ENCODE measurements at regions of chr22 and their contacts with region 1.

Region 1: DNA sequence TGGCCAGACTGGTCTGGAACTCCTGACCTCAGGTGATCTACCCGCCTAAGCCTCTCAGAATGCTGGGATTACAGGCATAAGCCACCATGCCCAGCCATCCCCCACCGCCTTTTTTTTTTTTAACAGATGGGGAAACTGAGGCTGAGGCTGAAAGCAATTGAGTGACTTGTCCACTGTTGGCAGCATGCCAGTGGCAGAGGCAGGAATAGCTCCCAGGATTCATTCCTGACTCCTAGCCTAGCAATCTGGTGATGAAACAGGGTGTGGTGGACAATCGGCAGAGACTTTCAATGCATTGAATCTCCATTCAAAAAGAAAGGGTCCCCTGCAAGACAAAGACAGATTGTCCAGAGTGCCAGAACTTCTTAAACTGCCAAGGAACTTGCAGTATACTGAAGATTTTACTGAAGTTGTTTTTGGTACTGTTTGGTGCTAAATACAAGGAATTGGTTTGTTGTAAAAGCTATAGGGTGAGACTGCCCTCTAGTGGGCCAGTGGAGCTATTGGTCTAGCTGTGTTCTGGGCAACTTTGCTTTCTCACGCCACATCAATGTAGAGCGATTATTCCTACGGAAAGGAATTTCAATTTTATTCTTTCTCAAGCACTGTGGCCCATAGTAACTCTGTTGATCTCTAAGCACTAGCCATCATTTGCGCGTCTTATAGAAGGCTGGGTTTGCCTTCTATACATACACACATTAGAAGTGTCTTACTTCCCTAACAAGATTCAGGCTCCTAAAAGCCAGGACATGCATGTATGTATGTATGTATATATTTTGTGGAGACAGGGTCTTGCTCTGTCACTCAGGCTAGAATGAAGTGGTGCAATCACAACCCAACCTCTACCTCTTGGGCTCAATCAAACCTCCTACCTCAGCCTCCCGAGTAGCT is 21.0 kb downstream of the C22orf31 start:
- DNase-seq: peak; percentile 83
- H3K4me3 ChIP-seq: no peak overlapping the region
- H3K27ac ChIP-seq: no peak overlapping the region
- H3K4me1 ChIP-seq: peaks cover 28% of the 10 kb centered on the region
- H3K27me3 ChIP-seq: no peaks in the 10 kb centered on the region
- CTCF ChIP-seq: peak; percentile 89 to 96
- POLR2A ChIP-seq: no peak

Region 2: DNA sequence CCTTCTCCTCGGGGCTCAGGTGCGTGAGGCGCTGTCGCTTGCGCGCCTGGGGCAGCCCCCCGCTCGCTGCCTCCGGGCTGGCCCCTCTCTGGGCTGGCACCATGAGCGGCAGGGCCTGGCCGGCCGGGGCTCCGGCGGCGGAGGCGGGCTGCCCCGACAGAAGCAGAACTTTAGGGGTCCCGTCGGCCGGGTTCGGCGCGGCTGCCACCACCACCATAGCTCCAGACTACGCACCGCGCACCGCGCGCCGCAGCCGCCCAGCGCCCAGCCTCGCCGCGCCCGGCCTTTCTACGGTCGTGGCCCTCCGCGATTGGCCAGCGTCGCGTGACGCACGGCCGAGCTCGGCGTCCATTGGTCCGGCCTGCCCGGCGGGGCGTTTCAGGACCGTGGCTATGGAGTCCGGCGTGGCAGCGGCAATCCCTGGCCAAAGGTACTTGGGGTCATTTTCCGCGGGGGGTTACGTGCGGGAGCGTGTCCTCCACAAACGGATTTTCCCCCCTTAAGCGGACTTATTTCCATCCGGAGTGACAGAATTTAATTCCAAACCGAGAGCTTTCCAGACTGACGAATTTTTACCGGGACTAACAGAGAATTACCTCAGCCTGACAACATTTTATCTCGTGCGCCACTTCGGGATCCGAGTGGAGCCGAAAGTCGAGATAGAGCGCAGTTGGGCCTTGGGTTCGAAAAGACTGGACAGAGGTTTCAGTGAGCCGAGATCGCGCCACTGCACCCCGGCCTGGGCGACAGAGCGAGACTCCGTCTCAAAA is 240.1 kb before region 1 on chr22 and contains the start of gene XBP1:
- CTCF ChIA-PET with region 1: interaction called, 11 read pairs
- POLR2A ChIA-PET with region 1: no interaction called
- dilution Hi-C with region 1: no loop called
- intact Hi-C with region 1: no loop called
- DNase-seq: peak; percentile 95
- H3K4me3 ChIP-seq: peak within 1 kb of the TSS; percentile 84 to 100 (median 100)
- H3K27ac ChIP-seq: peak within 1 kb of the TSS; percentile 100
- H3K4me1 ChIP-seq: peaks cover 26% of the 10 kb centered on the region
- H3K27me3 ChIP-seq: no peaks in the 10 kb centered on the region
- CTCF ChIP-seq: no peak
- POLR2A ChIP-seq: peak; percentile 94
- total RNA-seq, gene XBP1: 90.4 and 103 TPM in 2 replicates

Region 3: DNA sequence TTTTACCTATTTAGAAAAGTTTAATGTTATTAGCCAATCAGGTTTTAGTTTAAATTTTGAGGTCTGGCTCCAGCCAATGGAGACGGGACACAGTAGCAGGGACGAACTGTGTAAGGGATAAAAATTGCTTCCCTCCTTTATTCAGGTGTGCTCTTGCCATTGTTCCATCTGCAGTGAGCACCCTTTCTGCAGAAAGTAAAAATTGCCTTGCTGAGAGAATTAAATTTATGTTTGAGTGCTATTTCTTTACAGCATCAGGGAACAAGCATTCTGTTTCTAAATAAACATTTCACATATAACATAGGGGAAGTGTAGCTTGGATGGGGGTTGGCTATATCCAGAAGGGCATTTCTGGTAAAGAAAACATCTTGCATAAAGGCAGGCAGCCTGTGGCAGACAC is 193.6 kb before region 1 on chr22:
- CTCF ChIA-PET with region 1: interaction called, 10 read pairs
- POLR2A ChIA-PET with region 1: no interaction called
- dilution Hi-C with region 1: no loop called
- intact Hi-C with region 1: no loop called
- DNase-seq: no peak
- H3K4me3 ChIP-seq: no peak overlapping the region
- H3K27ac ChIP-seq: no peak overlapping the region
- H3K4me1 ChIP-seq: no peaks in the 10 kb centered on the region
- H3K27me3 ChIP-seq: no peaks in the 10 kb centered on the region
- CTCF ChIP-seq: no peak
- POLR2A ChIP-seq: no peak

Region 4: GRCh38 chr22:28882878-28883656 is 157.6 kb before region 1 on chr22 and contains the start of gene ZNRF3:
- CTCF ChIA-PET with region 1: interaction called, 32 read pairs
- POLR2A ChIA-PET with region 1: no interaction called
- dilution Hi-C with region 1: no loop called
- intact Hi-C with region 1: no loop called
- DNase-seq: peak; percentile 79
- H3K4me3 ChIP-seq: peak within 1 kb of the TSS; percentile 51 to 72 (median 54)
- H3K27ac ChIP-seq: no peak within 1 kb of the TSS
- H3K4me1 ChIP-seq: peaks cover 11% of the 10 kb centered on the region
- H3K27me3 ChIP-seq: no peaks in the 10 kb centered on the region
- CTCF ChIP-seq: no peak
- POLR2A ChIP-seq: peak; percentile 60
- total RNA-seq, gene ZNRF3: 4.4 and 5.2 TPM in 2 replicates

Region 5: GRCh38 chr22:28989484-28989883 is 51.1 kb before region 1 on chr22:
- CTCF ChIA-PET with region 1: no interaction called
- POLR2A ChIA-PET with region 1: no interaction called
- dilution Hi-C with region 1: no loop called
- intact Hi-C with region 1: no loop called
- DNase-seq: no peak
- H3K4me3 ChIP-seq: no peak overlapping the region
- H3K27ac ChIP-seq: no peak overlapping the region
- H3K4me1 ChIP-seq: no peaks in the 10 kb centered on the region
- H3K27me3 ChIP-seq: no peaks in the 10 kb centered on the region
- CTCF ChIP-seq: no peak
- POLR2A ChIP-seq: no peak

Region 6: DNA sequence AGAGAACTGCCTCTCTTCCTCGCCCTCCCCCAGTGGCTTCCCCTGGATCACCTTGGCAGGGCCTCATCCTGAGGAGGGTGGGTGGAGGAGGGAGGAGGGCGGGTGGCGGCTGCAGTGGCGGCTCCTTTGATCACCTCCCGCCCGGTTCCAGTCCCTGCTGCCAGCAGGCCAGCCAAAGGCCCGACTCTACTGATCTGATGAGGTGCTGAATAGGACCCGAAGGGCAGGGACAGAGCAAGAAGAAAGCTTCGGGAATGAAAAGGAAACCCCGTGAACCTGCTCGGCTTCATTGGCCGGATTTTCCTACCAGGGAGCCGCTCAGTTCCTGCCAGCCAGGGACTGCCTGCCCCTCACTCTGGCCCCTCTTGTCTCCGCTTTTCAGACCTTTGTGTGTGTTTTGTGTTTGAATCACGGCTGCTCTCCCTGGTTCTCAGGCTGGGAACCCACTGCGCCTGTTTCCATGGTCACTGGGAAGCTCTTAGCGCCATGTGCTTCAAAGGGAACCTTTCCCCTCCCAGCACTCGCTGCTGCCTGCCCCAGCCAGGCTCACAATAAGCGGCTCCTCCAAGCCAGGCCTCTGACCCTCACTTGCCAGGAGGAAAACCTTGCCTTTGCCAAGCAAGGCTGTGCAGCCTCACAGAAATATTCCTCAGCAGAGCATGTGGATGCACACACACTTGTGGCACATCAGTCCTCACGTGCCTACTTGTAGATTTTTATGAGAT is 35.8 kb before region 1 on chr22:
- CTCF ChIA-PET with region 1: interaction called, 12 read pairs
- POLR2A ChIA-PET with region 1: no interaction called
- dilution Hi-C with region 1: no loop called
- intact Hi-C with region 1: no loop called
- DNase-seq: peak; percentile 29
- H3K4me3 ChIP-seq: no peak overlapping the region
- H3K27ac ChIP-seq: no peak overlapping the region
- H3K4me1 ChIP-seq: no peaks in the 10 kb centered on the region
- H3K27me3 ChIP-seq: no peaks in the 10 kb centered on the region
- CTCF ChIP-seq: no peak
- POLR2A ChIP-seq: no peak

Region 7: DNA sequence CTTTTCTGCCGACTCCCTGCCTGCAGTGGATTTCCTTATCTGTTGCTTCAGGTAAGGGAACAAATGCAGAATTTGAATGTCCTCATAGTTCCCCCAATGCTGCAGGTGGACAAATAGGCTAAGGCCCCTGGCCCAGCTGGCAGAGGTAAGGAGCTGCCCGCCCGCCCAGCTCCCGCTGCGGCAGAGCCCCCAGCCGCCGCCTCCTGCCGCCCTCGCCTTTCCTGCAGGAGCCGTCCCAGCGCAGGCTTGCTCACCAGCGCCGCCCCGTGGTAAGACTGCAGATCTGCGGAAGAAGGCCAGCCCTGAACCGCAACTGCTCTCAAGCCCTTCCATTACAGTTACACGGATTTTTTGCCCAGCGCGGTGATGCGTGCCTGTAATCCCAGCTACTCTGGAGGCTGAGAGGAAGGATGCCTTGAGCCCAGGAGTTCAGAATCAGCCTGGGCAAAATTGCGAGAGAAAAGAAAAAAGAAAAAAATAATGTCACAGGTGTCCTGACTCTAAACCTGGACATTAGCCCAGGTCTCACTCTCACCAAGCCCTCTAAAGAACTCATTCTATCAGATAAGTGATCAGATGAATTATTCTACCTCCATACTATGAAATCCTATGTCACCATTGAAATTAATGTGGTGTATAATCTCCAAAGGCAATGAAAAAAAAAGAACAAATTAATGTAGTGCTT is 113.9 kb after region 1 on chr22:
- CTCF ChIA-PET with region 1: interaction called, 29 read pairs
- POLR2A ChIA-PET with region 1: no interaction called
- dilution Hi-C with region 1: no loop called
- intact Hi-C with region 1: loop called (anchors 2 kb)
- DNase-seq: peak; percentile 74
- H3K4me3 ChIP-seq: no peak overlapping the region
- H3K27ac ChIP-seq: no peak overlapping the region
- H3K4me1 ChIP-seq: no peaks in the 10 kb centered on the region
- H3K27me3 ChIP-seq: peaks cover 0 to 14% of the 10 kb centered on the region in 2 experiments
- CTCF ChIP-seq: peak; percentile 81 to 98
- POLR2A ChIP-seq: no peak